ENCODE measurements at regions of chr13 and their contacts with region 1.

Region 1: DNA sequence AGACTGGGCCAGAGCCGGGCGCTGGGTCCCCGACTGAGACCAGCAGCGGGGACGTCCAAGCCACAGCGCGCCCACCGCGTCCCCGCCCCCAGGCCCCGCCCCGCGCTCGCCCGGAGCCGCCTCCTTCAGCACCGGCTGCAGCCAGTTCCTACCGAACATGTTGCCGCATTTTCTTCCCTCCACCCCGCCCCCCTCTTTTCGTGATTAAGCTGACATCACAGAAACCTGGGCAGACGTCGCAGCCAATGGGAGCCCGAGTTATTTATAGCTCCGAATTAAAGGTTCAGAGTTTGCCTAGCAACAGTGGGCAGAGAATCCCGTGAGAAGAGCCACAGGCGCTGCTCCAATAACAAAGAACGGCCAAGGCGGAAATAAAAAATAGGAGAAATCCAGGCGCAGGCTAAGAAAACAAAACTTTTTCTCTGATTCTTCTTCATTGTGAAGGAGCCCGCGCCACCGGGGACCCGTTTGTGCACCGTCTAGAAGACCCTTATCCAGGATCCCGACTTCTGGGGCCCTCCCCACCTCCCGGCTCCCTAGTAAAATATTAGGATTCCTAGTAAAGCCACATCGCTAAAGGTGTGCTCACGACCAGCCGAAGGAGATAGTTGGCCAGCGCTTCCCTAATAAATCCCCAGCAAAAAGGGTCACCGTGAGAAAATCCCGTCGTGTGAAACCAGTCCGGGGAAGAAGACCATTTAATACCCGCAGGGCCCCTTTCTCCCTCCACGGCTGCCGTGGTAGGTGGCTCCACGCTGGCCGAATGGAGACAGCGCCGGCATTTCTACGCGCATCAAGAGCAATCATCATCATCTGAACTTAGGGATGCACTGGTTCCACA is 61.7 kb downstream of the SERP2 start:
- DNase-seq: peak; percentile 93 to 99
- H3K4me3 ChIP-seq: peak overlapping the region; percentile 67 to 80
- H3K27ac ChIP-seq: peak overlapping the region; percentile 83 to 92
- H3K4me1 ChIP-seq: peaks cover 0 to 16% of the 10 kb centered on the region in 2 donors
- H3K27me3 ChIP-seq: no peaks in the 10 kb centered on the region
- CTCF ChIP-seq: no peak

Region 2: DNA sequence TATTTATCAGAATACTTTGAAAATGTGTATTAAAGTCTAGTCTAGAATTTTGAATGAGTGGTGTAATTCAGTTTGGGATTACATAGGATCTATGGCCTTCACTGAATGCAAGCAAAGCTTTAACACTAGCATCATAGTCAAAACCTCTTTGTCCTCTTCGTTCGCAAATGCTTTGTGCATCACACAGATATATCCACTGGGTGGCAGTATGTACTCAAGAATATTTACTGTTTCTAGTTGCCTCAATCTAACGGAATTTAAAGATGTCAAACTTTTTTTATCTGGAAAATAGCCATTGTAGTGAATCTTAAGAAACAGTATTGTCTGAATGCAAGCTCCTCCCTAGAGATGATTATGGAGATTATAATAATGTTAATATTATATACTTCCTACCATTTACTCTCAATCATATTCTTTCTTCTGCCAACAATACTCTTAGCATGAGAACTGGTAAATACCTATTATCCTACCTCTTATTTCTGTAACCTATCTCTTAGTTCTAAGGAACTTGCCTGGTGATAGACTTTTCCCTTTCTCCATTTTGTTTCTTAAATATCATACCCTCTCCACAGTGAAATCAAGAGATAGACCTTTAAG is 529.8 kb before region 1 on chr13:
- intact Hi-C with region 1: loop called (anchors 2 kb)
- DNase-seq: no peak
- H3K4me3 ChIP-seq: no peak overlapping the region
- H3K27ac ChIP-seq: no peak overlapping the region
- H3K4me1 ChIP-seq: no peaks in the 10 kb centered on the region
- H3K27me3 ChIP-seq: no peaks in the 10 kb centered on the region
- CTCF ChIP-seq: peak; percentile 74 to 87 (median 79)

Region 3: DNA sequence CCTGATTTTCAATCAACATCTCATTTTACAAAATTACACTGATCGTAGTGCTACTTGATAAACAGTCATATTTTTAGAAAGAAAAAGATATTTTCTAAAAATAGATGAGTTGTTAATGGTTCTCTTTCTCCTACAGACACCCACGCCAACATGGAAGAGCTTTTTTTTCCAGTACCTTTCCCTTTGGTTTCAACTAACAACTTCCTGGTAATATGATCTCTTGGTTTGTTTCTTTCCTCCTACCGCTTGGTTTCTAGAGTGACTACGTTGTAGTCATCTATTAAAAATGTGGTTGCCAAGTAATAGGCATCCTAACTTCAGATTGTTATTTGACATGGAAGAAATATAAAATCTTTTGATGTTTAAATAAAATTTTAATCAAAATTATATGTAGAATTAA is 366.6 kb before region 1 on chr13:
- intact Hi-C with region 1: loop called (anchors 5 kb)
- DNase-seq: no peak
- H3K4me3 ChIP-seq: peak overlapping the region in 1 of 2 donors; percentile 29
- H3K27ac ChIP-seq: peak overlapping the region in 1 of 2 donors; percentile 54
- H3K4me1 ChIP-seq: peaks cover 0 to 3% of the 10 kb centered on the region in 2 donors
- H3K27me3 ChIP-seq: no peaks in the 10 kb centered on the region
- CTCF ChIP-seq: no peak

Region 4: GRCh38 chr13:44191504-44192171 is 243.7 kb before region 1 on chr13:
- intact Hi-C with region 1: loop called (anchors 1 kb)
- DNase-seq: peak in 1 of 2 donors; percentile 77
- H3K4me3 ChIP-seq: peak overlapping the region; percentile 24 to 39
- H3K27ac ChIP-seq: peak overlapping the region in 1 of 2 donors; percentile 1
- H3K4me1 ChIP-seq: peaks cover 0 to 2% of the 10 kb centered on the region in 2 donors
- H3K27me3 ChIP-seq: no peaks in the 10 kb centered on the region
- CTCF ChIP-seq: peak; percentile 64 to 84 (median 83)

Region 5: GRCh38 chr13:44237276-44237767 is 198.0 kb before region 1 on chr13:
- intact Hi-C with region 1: loop called (anchors 2 kb)
- DNase-seq: peak; percentile 64 to 92
- H3K4me3 ChIP-seq: no peak overlapping the region
- H3K27ac ChIP-seq: peak overlapping the region; percentile 86 to 92
- H3K4me1 ChIP-seq: peaks cover 9 to 19% of the 10 kb centered on the region in 2 donors
- H3K27me3 ChIP-seq: no peaks in the 10 kb centered on the region
- CTCF ChIP-seq: no peak

Region 6: DNA sequence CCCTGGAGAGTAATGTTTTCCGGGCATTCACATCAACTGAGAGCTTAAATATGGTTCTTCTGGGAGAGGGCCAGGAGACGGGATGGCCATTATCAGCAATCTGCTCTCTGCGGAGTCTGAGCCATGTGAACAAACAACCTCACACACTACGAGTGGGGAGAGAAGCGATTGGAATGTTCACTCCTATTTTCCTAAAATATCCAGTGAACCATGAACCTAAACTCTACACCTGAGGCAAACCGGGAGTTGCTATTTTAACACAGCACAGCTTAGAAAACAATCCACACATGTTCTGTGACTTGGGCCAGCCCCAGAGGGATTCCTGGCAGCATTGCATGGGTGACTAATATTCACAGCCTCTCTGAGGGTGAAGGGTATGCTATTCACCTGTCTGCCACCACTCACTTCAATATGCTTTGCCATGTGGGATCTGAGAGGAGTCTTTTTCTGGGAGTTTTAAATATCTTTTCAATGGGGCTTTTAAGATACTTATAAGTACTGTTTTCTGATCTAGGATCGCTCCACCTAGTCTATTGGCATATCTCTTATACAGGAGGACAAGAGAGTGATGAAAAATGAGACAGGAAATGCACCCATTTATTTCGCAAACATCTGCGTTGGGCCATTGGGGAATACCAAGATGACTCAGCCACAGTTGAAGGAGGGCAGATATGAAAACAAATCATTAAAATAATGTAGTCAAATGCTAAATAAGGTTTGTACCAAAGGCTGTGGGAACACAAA is 134.3 kb before region 1 on chr13:
- intact Hi-C with region 1: loop called (anchors 5 kb)
- DNase-seq: peak; percentile 53 to 85
- H3K4me3 ChIP-seq: no peak overlapping the region
- H3K27ac ChIP-seq: peak overlapping the region; percentile 77 to 88
- H3K4me1 ChIP-seq: peaks cover 33 to 61% of the 10 kb centered on the region in 2 donors
- H3K27me3 ChIP-seq: no peaks in the 10 kb centered on the region
- CTCF ChIP-seq: no peak

Region 7: GRCh38 chr13:44508562-44509077 is 73.3 kb after region 1 on chr13:
- intact Hi-C with region 1: no loop called
- DNase-seq: no peak
- H3K4me3 ChIP-seq: no peak overlapping the region
- H3K27ac ChIP-seq: no peak overlapping the region
- H3K4me1 ChIP-seq: no peaks in the 10 kb centered on the region
- H3K27me3 ChIP-seq: no peaks in the 10 kb centered on the region
- CTCF ChIP-seq: no peak

Region 8: DNA sequence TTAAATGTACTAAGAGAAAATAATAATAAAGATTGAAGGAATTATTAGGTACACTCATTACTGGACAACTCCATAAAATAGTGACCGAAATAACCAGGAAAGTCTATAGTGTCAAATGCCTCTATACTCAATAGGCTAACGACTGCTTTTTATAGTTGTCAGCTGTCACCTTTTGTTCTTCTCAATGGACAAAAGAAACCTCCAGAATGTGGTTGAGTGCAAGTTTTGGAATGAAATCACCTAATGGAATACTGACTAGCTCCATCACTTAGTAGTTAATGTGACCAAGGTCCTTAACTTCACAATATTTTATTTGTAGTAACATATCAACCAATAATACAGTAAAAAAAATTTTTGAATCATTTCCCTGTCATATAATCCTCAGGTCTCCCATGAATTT is 122.6 kb after region 1 on chr13:
- intact Hi-C with region 1: no loop called
- DNase-seq: no peak
- H3K4me3 ChIP-seq: no peak overlapping the region
- H3K27ac ChIP-seq: no peak overlapping the region
- H3K4me1 ChIP-seq: no peaks in the 10 kb centered on the region
- H3K27me3 ChIP-seq: no peaks in the 10 kb centered on the region
- CTCF ChIP-seq: no peak

Measured in ascending aorta (tissue), 2 donors.